B cell (primary cell): ENCODE measurements at regions of chr22 and their contacts with region 1.

Region 1: DNA sequence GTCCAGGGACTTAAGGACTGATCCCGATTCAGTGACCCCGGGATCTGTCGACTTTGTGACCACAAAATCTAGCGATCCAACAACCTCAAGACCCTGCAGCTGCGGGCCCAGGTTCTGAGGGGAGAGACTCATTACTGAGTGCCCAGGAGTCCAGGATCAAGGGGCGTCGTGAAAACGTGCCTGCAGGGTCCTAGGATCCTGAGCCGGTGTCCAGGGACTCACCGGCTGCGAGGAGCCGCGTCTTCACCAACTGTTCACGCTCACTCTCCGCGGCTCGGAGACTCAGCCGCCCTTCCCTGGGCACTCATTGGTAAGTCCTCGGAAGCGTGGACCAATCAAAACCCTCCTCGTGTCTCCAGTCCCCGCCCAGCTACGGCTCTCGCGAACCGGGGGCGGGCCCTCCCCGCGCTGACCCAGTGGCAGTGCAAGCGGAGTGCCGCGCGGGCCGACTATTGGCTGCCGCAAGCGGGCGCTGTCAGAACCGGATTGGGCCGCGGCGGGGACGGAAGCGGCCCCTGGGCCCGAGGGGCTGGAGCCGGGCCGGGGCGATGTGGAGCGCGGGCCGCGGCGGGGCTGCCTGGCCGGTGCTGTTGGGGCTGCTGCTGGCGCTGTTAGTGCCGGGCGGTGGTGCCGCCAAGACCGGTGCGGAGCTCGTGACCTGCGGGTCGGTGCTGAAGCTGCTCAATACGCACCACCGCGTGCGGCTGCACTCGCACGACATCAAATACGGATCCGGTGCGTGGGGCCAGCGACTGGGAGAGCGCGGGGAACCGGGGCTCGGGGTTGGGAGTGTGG is at the start of gene SDF2L1:
- DNase-seq: peak; percentile 98
- ATAC-seq: peak; percentile 96
- H3K4me3 ChIP-seq: peak within 1 kb of the TSS; percentile 50 to 93 (median 75)
- H3K4me3 Mint-ChIP-seq: peak within 1 kb of the TSS; percentile 82
- H3K27ac ChIP-seq: peak within 1 kb of the TSS; percentile 41 to 84
- H3K27ac Mint-ChIP-seq: peak within 1 kb of the TSS; percentile 78
- H3K4me1 ChIP-seq: peaks cover 12 to 27% of the 10 kb centered on the region in 2 donors
- H3K4me1 Mint-ChIP-seq: peaks cover 26% of the 10 kb centered on the region
- H3K27me3 ChIP-seq: no peaks in the 10 kb centered on the region
- H3K27me3 Mint-ChIP-seq: no peaks in the 10 kb centered on the region
- CTCF ChIP-seq: no peak
- total RNA-seq, gene SDF2L1: 10.6 and 15.2 TPM in 2 replicates

Region 2: DNA sequence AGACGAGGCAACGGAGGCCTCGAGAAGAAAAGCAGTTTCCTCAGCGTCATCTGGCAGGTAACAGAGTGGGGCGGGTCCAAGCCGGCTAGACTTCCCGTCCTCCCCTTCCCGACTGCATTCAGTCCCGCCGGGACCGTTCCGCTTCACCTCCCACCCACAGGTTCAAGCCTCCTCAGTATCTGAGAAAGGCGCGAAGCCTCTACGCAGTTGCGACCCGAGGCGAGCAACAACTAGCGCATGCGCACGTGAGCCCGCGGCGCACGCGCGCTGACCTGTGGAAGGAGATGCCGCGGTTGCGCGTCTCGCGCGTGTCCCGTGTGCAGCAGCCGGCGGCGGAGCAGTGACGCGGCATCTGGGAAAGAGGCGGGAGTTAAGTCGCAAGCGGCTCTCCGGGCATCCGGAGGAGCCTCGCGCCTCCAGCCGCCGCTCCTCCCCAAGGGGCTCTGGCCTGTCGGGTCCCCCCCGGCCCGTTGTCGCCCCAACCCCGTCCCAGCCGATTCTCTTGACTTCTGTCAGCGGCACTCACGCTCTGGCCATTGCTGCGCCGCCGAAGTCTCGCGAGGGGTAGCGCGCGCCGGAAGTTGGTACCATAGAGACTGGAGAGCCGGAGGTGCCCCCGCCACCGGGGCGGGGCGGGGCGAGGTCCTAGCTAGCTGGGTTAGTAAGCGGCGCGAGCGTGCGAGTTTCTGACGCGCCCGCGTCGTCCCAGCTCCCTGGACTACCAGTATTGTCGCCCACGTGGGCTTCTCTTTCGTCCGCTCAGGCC is 640.2 kb before region 1 on chr22 and contains the start of gene THAP7:
- CTCF ChIA-PET with region 1: no interaction called
- POLR2A ChIA-PET with region 1: no interaction called
- intact Hi-C with region 1: loop called (anchors 5 kb)
- DNase-seq: peak; percentile 99
- ATAC-seq: peak; percentile 88
- H3K4me3 ChIP-seq: peak within 1 kb of the TSS; percentile 66 to 99 (median 88)
- H3K4me3 Mint-ChIP-seq: peak within 1 kb of the TSS; percentile 95
- H3K27ac ChIP-seq: peak within 1 kb of the TSS; percentile 91 to 96
- H3K27ac Mint-ChIP-seq: peak within 1 kb of the TSS; percentile 99
- H3K4me1 ChIP-seq: peaks cover 24 to 36% of the 10 kb centered on the region in 2 donors
- H3K4me1 Mint-ChIP-seq: peaks cover 32% of the 10 kb centered on the region
- H3K27me3 ChIP-seq: no peaks in the 10 kb centered on the region
- H3K27me3 Mint-ChIP-seq: no peaks in the 10 kb centered on the region
- CTCF ChIP-seq: no peak
- total RNA-seq, gene THAP7: 37.7 and 43.1 TPM in 2 replicates

Region 3: GRCh38 chr22:21622011-21622918 is 19.7 kb before region 1 on chr22:
- CTCF ChIA-PET with region 1: interaction called, 168 read pairs
- POLR2A ChIA-PET with region 1: interaction called, 3 read pairs
- intact Hi-C with region 1: no loop called
- DNase-seq: no peak
- ATAC-seq: no peak
- H3K4me3 ChIP-seq: no peak overlapping the region
- H3K4me3 Mint-ChIP-seq: no peak overlapping the region
- H3K27ac ChIP-seq: peak overlapping the region in 1 of 2 donors; percentile 15
- H3K27ac Mint-ChIP-seq: no peak overlapping the region
- H3K4me1 ChIP-seq: peaks cover 7 to 13% of the 10 kb centered on the region in 2 donors
- H3K4me1 Mint-ChIP-seq: peaks cover 28% of the 10 kb centered on the region
- H3K27me3 ChIP-seq: no peaks in the 10 kb centered on the region
- H3K27me3 Mint-ChIP-seq: no peaks in the 10 kb centered on the region
- CTCF ChIP-seq: no peak

Region 4: GRCh38 chr22:21657361-21658032 is 15.5 kb after region 1 on chr22:
- CTCF ChIA-PET with region 1: interaction called, 19 read pairs
- POLR2A ChIA-PET with region 1: interaction called, 7 read pairs
- intact Hi-C with region 1: loop called (anchors 1 kb)
- DNase-seq: peak; percentile 88
- ATAC-seq: peak; percentile 97
- H3K4me3 ChIP-seq: peak overlapping the region in 4 of 5 experiments; percentile 60 to 73 (median 64)
- H3K4me3 Mint-ChIP-seq: peak overlapping the region; percentile 90
- H3K27ac ChIP-seq: no peak overlapping the region
- H3K27ac Mint-ChIP-seq: peak overlapping the region; percentile 75
- H3K4me1 ChIP-seq: peaks cover 6 to 18% of the 10 kb centered on the region in 2 donors
- H3K4me1 Mint-ChIP-seq: peaks cover 10% of the 10 kb centered on the region
- H3K27me3 ChIP-seq: no peaks in the 10 kb centered on the region
- H3K27me3 Mint-ChIP-seq: no peaks in the 10 kb centered on the region
- CTCF ChIP-seq: peak; percentile 31